ENCODE measurements at regions of chr3 and their contacts with region 1.

Region 1: DNA sequence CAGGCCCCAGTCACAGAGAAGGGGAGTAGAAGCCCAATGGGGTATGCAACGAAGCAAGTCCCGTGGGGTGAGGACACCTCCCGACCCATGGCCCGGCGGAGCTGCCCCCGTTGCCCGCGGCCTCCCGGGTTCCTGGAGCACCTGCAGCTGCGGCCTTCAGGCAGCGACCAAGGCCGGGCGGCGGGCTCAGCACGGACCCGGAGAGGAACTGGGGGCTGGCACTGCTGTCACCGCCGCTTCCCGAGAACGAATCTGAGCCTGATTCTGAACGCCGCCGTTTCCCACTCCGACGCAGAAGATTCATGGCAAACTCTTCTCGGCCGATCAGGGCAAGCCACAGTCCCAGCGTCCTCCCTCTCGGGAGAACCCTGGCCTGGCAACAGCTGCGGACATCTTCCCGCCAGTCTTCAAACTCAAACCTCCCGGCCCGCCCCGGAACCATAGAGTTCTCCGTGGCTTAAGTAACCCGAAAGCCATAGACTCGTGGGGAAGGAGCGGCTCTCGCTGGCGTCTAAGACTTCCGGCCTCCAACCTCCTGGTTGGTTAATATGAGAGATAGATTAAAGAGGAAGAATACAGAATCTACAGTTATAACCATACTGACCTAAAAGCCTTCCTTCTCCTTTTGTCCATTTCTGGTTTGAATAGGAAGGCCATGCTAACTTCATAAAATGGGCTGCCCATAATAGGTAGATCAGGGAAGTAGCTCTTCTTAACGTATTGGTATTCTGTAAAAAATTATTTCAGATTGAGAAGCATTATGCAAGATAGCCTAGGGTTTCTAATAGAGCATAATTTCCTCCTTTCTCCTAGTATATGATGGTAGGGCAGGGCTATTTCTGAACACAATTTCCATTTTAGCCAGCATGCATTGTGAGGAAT is at the start of gene POLQ:
- DNase-seq: peak; percentile 96
- H3K4me3 Mint-ChIP-seq: peak within 1 kb of the TSS; percentile 99
- H3K27ac Mint-ChIP-seq: peak within 1 kb of the TSS; percentile 99
- H3K4me1 Mint-ChIP-seq: peaks cover 30% of the 10 kb centered on the region
- H3K27me3 Mint-ChIP-seq: no peaks in the 10 kb centered on the region
- total RNA-seq, gene POLQ: 30.3 and 31.0 TPM in 2 replicates

Region 2: DNA sequence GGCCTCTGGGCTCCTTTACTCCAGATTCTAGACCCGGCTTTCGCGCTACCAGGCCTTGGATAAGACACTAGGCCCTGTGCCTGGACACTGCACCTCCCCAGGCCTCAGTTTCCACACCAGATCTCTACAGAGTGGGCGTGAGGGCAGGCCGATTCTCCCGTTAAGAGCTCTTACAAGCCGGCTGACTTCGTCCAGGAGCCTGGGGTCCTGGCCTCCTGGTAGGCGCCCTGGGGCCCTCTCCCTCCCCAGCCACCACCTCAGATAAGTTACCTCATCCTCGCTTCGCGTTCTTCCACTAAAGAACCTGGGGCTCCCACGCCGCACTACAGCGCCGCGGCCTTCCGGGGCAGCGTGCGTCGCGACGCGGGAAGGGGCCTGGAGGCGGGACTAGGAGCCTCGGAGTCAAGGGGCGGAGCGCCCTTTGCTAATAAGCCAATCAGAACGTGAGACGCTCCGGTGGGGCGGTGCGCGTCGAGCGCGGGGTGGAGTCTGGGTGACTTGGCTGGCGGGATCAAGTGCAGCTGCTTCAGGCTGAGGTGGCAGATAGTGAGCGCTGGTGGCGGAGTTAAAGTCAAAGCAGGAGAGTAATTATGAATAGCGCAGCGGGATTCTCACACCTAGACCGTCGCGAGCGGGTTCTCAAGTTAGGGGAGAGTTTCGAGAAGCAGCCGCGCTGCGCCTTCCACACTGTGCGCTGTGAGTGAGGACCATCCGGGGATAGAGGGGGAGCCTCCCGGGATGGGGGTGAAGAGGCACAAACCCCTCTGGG is 289.1 kb after region 1 on chr3 and contains the starts of genes EAF2 and IQCB1:
- intact Hi-C with region 1: loop called (anchors 1 kb)
- DNase-seq: peak; percentile 99
- H3K4me3 Mint-ChIP-seq: peak within 1 kb of the TSS; percentile 90
- H3K27ac Mint-ChIP-seq: peak within 1 kb of the TSS; percentile 96
- H3K4me1 Mint-ChIP-seq: peaks cover 41% of the 10 kb centered on the region
- H3K27me3 Mint-ChIP-seq: no peaks in the 10 kb centered on the region
- total RNA-seq, gene EAF2: 13.7 and 14.5 TPM in 2 replicates
- total RNA-seq, gene IQCB1: 49.1 and 51.6 TPM in 2 replicates

Region 3: GRCh38 chr3:122101646-122102045 is 555.8 kb after region 1 on chr3:
- intact Hi-C with region 1: loop called (anchors 2 kb)
- DNase-seq: peak; percentile 85
- H3K4me3 Mint-ChIP-seq: peak overlapping the region; percentile 71
- H3K27ac Mint-ChIP-seq: peak overlapping the region; percentile 80
- H3K4me1 Mint-ChIP-seq: peaks cover 37% of the 10 kb centered on the region
- H3K27me3 Mint-ChIP-seq: peaks cover 1% of the 10 kb centered on the region

Region 4: GRCh38 chr3:122365073-122365472 is 819.3 kb after region 1 on chr3:
- intact Hi-C with region 1: loop called (anchors 5 kb)
- DNase-seq: no peak
- H3K4me3 Mint-ChIP-seq: peak overlapping the region; percentile 30
- H3K27ac Mint-ChIP-seq: peak overlapping the region; percentile 95
- H3K4me1 Mint-ChIP-seq: peaks cover 33% of the 10 kb centered on the region
- H3K27me3 Mint-ChIP-seq: no peaks in the 10 kb centered on the region

Region 5: DNA sequence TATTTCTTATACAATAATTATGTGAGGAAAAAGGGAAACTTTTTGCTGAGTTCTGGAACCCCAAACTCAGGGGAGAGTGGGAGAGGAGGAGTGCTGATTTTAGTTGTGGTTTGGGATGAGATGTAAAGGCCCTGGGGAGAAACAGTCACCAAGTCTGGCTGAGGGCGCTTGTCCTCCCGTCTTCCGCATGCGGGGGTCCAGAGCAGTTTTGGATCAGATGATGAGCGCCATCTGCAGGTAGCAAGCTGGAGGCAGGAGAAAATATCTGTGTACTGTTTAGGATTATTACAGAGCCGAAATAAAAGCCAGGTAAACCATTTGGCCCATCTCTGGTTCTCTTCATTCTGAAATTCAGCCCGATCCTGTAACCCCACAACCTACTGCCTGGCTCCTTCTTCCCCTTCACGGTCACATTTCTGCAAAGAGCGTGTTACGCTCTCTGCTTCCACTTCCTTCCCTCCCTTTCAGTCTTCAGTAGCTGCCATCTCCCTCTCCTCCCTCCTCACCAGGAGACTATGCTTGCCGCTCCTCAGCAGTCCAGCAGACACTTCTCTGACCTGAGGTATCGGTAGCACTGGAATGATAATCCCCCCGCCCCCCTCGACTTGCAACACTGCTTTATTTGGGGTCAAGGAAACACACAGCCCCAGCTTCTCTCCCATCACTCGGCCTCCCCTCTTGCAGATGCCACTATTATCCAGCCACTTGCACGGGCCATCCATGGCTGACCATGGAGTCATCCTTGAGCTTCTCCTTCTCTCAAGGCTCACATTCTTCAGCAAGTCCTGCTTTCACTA is 1133.5 kb after region 1 on chr3:
- intact Hi-C with region 1: loop called (anchors 1 kb)
- DNase-seq: peak; percentile 94
- H3K4me3 Mint-ChIP-seq: peak overlapping the region; percentile 99
- H3K27ac Mint-ChIP-seq: peak overlapping the region; percentile 98
- H3K4me1 Mint-ChIP-seq: peaks cover 56% of the 10 kb centered on the region
- H3K27me3 Mint-ChIP-seq: no peaks in the 10 kb centered on the region